Activated B cell treated with CpG ODN at 0.5 μM for 24 hours (primary cell): ENCODE measurements at regions of chr18 and their contacts with region 1.

Region 1: DNA sequence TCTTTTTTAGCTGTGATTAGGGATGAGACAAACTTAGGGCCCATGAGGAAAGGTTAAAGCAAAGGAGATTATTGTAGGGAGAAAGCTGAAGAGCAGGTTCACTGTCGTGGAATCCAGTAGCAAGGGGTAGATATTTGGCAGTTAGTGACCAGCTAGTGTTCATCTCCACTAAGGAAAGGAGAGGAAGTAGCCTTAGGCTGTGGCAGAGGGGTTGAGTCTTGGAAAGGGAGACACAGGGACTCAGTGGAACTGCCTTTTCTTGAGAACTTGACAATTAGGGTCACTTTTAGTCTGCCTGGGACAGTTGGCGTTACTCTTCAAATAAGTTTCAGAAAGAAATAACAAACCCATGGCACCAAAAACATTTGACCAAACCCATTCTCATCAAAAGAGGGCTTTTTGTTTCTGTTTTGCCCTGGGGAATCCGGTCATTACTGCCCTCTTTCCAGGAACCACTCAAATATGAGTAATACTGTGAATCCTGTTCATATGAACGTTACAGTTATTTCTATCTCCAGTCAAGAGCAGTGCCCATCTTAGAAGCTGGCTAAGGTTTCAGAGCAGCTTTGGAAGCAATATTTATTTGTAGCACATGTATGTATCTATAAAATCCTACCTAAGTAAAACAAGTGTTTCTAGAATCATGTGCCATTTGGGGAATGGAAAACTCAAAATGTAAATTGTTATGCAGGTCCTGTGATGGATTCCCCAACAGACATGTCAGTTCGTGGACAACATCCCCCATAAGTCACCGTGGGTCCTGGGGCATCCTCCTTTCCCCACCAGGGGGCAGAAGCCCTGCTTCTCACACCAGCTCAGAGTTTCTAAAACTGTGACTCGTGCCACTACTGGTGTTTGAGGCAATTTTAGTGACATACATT is 77.3 kb upstream of the PHLPP1 start:
- DNase-seq: peak; percentile 20
- ATAC-seq: peak; percentile 50
- H3K4me3 Mint-ChIP-seq: no peak overlapping the region
- H3K27ac Mint-ChIP-seq: no peak overlapping the region
- H3K4me1 Mint-ChIP-seq: no peaks in the 10 kb centered on the region
- H3K27me3 Mint-ChIP-seq: peaks cover 7% of the 10 kb centered on the region
- CTCF ChIP-seq: no peak

Region 2: DNA sequence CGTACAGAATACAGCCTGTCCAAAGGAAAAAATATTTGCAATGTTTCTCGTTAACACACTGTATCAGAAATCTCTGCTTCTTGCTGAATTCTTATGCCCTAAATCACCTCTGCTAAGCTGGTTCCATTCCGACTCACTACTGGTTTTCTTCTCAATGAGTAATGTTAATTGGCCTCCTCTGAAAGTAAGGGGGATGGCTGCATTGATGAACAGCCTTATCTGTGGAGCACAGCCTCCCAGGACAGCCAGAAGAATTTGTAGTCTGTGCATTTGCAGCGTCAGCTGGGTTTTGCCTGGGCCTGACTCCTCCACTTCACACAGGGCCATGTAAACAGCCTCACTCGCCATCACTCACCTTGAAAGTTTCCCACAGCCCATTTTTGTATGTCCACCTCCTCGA is 873.0 kb before region 1 on chr18:
- CTCF ChIA-PET with region 1: no interaction called
- POLR2A ChIA-PET with region 1: no interaction called
- intact Hi-C with region 1: no loop called
- DNase-seq: no peak
- ATAC-seq: no peak
- H3K4me3 Mint-ChIP-seq: no peak overlapping the region
- H3K27ac Mint-ChIP-seq: no peak overlapping the region
- H3K4me1 Mint-ChIP-seq: no peaks in the 10 kb centered on the region
- H3K27me3 Mint-ChIP-seq: peaks cover 4% of the 10 kb centered on the region
- CTCF ChIP-seq: no peak

Region 3: GRCh38 chr18:62957885-62958472 is 319.9 kb after region 1 on chr18:
- CTCF ChIA-PET with region 1: interaction called, 5 read pairs
- POLR2A ChIA-PET with region 1: no interaction called
- intact Hi-C with region 1: loop called (anchors 1 kb)
- DNase-seq: no peak
- ATAC-seq: peak; percentile 77
- H3K4me3 Mint-ChIP-seq: no peak overlapping the region
- H3K27ac Mint-ChIP-seq: no peak overlapping the region
- H3K4me1 Mint-ChIP-seq: no peaks in the 10 kb centered on the region
- H3K27me3 Mint-ChIP-seq: no peaks in the 10 kb centered on the region
- CTCF ChIP-seq: no peak